GM12878 (cell line): ENCODE measurements at regions of chr1 and their contacts with region 1.

Region 1: DNA sequence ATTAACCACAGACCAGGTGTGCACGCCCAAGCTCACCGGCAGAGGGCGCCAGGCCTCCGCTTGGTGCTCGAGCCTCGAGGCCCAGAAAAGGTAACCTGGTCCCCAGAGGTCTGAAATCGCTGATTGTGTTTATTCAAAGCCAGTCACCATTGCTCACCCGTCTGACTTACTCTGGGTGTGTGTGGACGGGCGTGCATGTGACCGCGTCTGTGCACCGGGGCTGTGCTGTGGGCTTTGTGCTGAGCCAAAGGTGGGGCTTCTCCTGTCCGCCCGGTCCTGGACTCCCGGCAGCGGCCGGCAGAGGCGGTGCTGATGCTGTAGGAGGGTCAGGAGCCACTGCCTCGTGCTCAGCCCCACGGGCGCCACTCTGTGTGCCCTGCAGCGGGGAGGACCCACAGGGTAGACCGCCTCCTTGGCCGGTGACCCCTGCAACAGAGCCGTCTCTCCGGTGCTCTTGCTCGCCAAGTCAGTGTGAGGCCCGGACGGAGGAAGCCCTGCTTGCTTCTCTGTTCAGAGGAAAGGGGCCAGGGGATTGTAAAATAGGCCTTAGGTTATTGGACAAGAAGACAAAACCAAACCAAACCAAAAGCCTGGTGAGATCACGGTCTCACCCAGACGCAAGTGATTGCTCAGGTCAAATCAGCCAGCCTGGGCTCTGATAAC is 32.0 kb upstream of the BTG2 start:
- DNase-seq: peak; percentile 72
- ATAC-seq: peak; percentile 85
- H3K4me3 ChIP-seq: peak overlapping the region; percentile 63
- H3K27ac ChIP-seq: peak overlapping the region; percentile 89
- H3K4me1 ChIP-seq: peaks cover 41% of the 10 kb centered on the region
- H3K27me3 ChIP-seq: no peaks in the 10 kb centered on the region
- CTCF ChIP-seq: peak; percentile 90 to 95 (median 90)
- EP300 ChIP-seq: no peak
- POLR2A ChIP-seq: peak; percentile 70
- RAD21 ChIP-seq: peak; percentile 97

Region 2: DNA sequence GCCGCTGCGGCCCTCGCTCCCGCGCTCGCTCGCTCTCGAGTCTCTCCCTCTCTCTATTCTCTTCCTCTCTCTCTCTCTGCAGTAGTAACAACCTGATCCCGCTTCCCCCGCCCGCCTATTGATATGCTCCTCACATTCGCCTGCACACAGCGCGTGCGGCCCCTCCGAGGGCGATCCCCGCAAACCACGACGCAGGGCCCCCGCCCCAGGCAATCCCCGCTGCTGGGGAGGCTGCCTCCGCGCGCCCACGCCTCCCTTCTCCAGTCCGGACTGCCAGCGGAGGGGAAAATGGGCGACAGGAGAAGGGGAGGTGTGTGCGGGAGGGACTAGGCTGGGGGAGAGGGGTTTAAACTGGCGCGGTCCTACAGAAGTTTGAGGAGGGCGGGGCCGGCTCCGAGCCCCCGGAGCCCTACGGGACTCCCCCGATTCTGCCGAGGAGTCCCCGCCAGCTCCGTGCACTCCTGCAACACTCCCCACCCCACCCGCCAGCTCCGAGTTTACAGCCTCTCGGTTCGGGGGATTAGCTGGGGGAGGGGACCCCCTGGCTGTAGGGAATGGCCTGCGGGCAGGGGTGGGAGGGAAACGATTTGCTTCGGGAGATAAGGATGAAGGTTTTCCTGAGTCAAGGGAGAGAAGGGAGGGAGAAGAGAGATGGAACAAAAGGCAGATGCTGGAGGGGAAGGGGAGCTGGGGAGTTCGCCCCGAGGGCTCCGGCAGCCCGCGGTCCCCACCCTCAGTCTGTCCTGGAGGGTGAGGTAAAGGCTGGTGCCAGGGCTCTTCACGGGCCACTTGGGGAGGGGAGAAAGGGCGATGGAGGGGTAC is 629.7 kb before region 1 on chr1:
- CTCF ChIA-PET with region 1: no interaction called
- POLR2A ChIA-PET with region 1: no interaction called
- RAD21 ChIA-PET with region 1: no interaction called
- SMC1A ChIA-PET with region 1: no interaction called
- in situ Hi-C with region 1: no loop called
- intact Hi-C with region 1: no loop called
- DNase-seq: no peak
- ATAC-seq: peak; percentile 40
- H3K4me3 ChIP-seq: no peak overlapping the region
- H3K27ac ChIP-seq: no peak overlapping the region
- H3K4me1 ChIP-seq: no peaks in the 10 kb centered on the region
- H3K27me3 ChIP-seq: peaks cover 6% of the 10 kb centered on the region in 2 experiments
- CTCF ChIP-seq: no peak
- EP300 ChIP-seq: no peak
- POLR2A ChIP-seq: no peak
- RAD21 ChIP-seq: no peak

Region 3: GRCh38 chr1:203038891-203039608 is 234.3 kb before region 1 on chr1:
- CTCF ChIA-PET with region 1: interaction called, 127 read pairs
- POLR2A ChIA-PET with region 1: no interaction called
- RAD21 ChIA-PET with region 1: interaction called, 20 read pairs
- SMC1A ChIA-PET with region 1: interaction called, 18 read pairs
- in situ Hi-C with region 1: no loop called
- intact Hi-C with region 1: loop called (anchors 2 kb)
- DNase-seq: no peak
- ATAC-seq: peak; percentile 91
- H3K4me3 ChIP-seq: no peak overlapping the region
- H3K27ac ChIP-seq: no peak overlapping the region
- H3K4me1 ChIP-seq: peaks cover 11% of the 10 kb centered on the region
- H3K27me3 ChIP-seq: no peaks in the 10 kb centered on the region
- CTCF ChIP-seq: peak; percentile 88 to 91 (median 89)
- EP300 ChIP-seq: no peak
- POLR2A ChIP-seq: no peak
- RAD21 ChIP-seq: peak; percentile 79

Region 4: GRCh38 chr1:203202431-203203245 is 70.7 kb before region 1 on chr1:
- CTCF ChIA-PET with region 1: no interaction called
- POLR2A ChIA-PET with region 1: no interaction called
- RAD21 ChIA-PET with region 1: no interaction called
- SMC1A ChIA-PET with region 1: no interaction called
- in situ Hi-C with region 1: no loop called
- intact Hi-C with region 1: no loop called
- DNase-seq: no peak
- ATAC-seq: no peak
- H3K4me3 ChIP-seq: no peak overlapping the region
- H3K27ac ChIP-seq: no peak overlapping the region
- H3K4me1 ChIP-seq: no peaks in the 10 kb centered on the region
- H3K27me3 ChIP-seq: peaks cover 0 to 5% of the 10 kb centered on the region in 2 experiments; a peak in 3 of 4 replicates
- CTCF ChIP-seq: no peak
- EP300 ChIP-seq: no peak
- POLR2A ChIP-seq: no peak
- RAD21 ChIP-seq: no peak

Region 5: DNA sequence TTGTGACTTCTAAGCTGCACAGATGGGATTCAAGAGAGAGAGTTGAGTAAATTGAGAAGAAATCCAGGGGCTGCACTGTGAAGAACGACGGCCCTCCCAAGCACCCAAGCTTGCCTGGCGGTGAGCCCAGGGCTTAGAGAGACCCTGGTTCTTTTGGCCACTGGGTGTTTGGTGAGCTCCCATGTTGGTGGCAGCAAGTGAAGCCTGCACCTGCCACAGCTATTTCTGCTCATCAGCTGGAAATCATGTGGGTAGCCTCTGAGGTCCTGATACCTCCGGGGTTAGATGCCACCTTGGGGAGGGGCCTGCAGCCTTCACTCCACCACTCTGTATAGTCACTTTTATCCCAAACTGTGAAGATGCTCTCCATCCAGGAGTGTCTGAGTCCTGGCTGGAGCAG is 25.8 kb after region 1 on chr1:
- CTCF ChIA-PET with region 1: interaction called, 17 read pairs
- POLR2A ChIA-PET with region 1: interaction called, 6 read pairs
- RAD21 ChIA-PET with region 1: interaction called, 9 read pairs
- SMC1A ChIA-PET with region 1: no interaction called
- in situ Hi-C with region 1: no loop called
- intact Hi-C with region 1: no loop called
- DNase-seq: no peak
- ATAC-seq: peak; percentile 72
- H3K4me3 ChIP-seq: peak overlapping the region; percentile 43; the same call in 1 of the 2 replicates
- H3K27ac ChIP-seq: peak overlapping the region; percentile 80
- H3K4me1 ChIP-seq: peaks cover 55% of the 10 kb centered on the region
- H3K27me3 ChIP-seq: no peaks in the 10 kb centered on the region
- CTCF ChIP-seq: no peak
- EP300 ChIP-seq: 0 out of 4 replicates have a peak, but pooled peaks of 1 of the 2 experiments have one; percentile 13
- POLR2A ChIP-seq: no peak; the same call in 1 of the 2 replicates
- RAD21 ChIP-seq: no peak

Region 6: DNA sequence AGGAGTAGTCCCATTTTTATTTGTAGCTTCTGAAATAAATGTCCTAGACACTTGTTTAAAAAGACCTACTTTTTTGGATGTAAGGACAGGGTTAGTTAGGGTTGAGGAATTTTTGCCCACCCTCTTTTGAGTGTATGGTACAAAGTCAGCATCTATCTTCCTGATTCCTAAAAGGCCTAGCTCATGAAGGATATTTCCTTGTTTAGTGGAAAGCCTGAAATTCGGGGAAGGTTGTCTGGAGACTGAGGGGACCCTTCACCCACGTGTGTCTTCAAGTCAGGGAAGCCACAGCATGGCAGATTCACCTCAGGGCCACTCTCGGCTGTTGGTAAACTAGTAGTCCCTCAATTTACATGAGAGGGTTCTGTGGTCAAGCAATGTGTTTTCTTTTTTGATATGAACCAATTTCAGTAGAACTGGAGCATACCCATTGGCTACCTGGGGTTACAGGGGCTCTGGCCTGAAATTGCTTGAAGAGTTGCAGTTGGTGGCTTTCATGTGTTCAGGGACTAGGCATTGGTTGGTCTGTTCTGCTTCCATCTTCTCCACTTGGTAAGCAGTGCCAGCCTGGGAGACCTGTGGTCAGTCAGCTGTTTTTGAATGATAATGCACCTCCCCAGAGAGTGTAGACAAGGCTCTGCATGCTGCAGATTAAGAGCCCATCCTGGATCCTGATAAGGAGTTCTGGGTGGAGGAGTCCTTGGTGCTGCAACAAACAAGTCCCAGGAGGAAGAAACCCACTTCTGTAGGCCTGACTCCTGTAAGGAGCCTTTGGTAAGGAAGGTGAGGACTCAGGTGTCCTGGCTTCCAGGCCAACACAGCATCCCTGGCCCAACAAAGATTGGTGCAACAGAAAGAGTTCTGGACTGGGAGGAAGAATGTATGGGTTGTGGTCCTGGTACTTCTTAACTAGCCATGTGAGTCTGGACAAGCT is 38.3 kb after region 1 on chr1:
- CTCF ChIA-PET with region 1: interaction called, 70 read pairs
- POLR2A ChIA-PET with region 1: interaction called, 370 read pairs
- RAD21 ChIA-PET with region 1: interaction called, 470 read pairs
- SMC1A ChIA-PET with region 1: interaction called, 183 read pairs
- in situ Hi-C with region 1: no loop called
- intact Hi-C with region 1: no loop called
- DNase-seq: no peak
- ATAC-seq: peak; percentile 22
- H3K4me3 ChIP-seq: no peak overlapping the region
- H3K27ac ChIP-seq: 0 out of 2 replicates have a peak overlapping the region, but pooled peaks have one; percentile 10
- H3K4me1 ChIP-seq: peaks cover 19% of the 10 kb centered on the region
- H3K27me3 ChIP-seq: no peaks in the 10 kb centered on the region
- CTCF ChIP-seq: no peak
- EP300 ChIP-seq: no peak
- POLR2A ChIP-seq: no peak
- RAD21 ChIP-seq: no peak

Region 7: GRCh38 chr1:203440771-203441170 is 167.4 kb after region 1 on chr1:
- CTCF ChIA-PET with region 1: interaction called, 82 read pairs
- POLR2A ChIA-PET with region 1: no interaction called
- RAD21 ChIA-PET with region 1: interaction called, 9 read pairs
- SMC1A ChIA-PET with region 1: interaction called, 27 read pairs
- in situ Hi-C with region 1: loop called (anchors 5 kb)
- intact Hi-C with region 1: loop called (anchors 5 kb)
- DNase-seq: no peak
- ATAC-seq: peak; percentile 95
- H3K4me3 ChIP-seq: no peak overlapping the region
- H3K27ac ChIP-seq: no peak overlapping the region
- H3K4me1 ChIP-seq: no peaks in the 10 kb centered on the region
- H3K27me3 ChIP-seq: peaks cover 0 to 3% of the 10 kb centered on the region in 2 experiments; a peak in 2 of 4 replicates
- CTCF ChIP-seq: peak; percentile 31 to 77 (median 52); a peak in 4 of 6 replicates
- EP300 ChIP-seq: no peak
- POLR2A ChIP-seq: no peak
- RAD21 ChIP-seq: peak; percentile 82

Region 8: GRCh38 chr1:203702130-203702577 is 428.8 kb after region 1 on chr1:
- CTCF ChIA-PET with region 1: interaction called, 5 read pairs
- POLR2A ChIA-PET with region 1: no interaction called
- RAD21 ChIA-PET with region 1: no interaction called
- SMC1A ChIA-PET with region 1: interaction called, 3 read pairs
- in situ Hi-C with region 1: loop called (anchors 5 kb)
- intact Hi-C with region 1: no loop called
- DNase-seq: peak; percentile 40
- ATAC-seq: peak; percentile 92
- H3K4me3 ChIP-seq: no peak overlapping the region
- H3K27ac ChIP-seq: no peak overlapping the region
- H3K4me1 ChIP-seq: no peaks in the 10 kb centered on the region; the same call in 1 of the 2 replicates
- H3K27me3 ChIP-seq: 0 out of 4 replicates have a peak, but pooled peaks cover 0 to 2% of the 10 kb centered on the region in 2 experiments
- CTCF ChIP-seq: peak; percentile 77 to 89 (median 88)
- EP300 ChIP-seq: no peak
- POLR2A ChIP-seq: no peak
- RAD21 ChIP-seq: peak; percentile 94